Dorsolateral prefrontal cortex (tissue), 120 donors: ENCODE measurements at regions of chr17 and their contacts with region 1.

Region 1: GRCh38 chr17:63406689-63407330 is 39.3 kb downstream of the CYB561 start:
- DNase-seq: peak in 5 of 10 donors; percentile 59 to 87 (median 73)
- H3K4me3 ChIP-seq: no peak overlapping the region
- H3K27ac ChIP-seq: peak overlapping the region in 3 of 59 donors; percentile 3 to 22 (median 21)
- H3K27me3 ChIP-seq: no peaks in the 10 kb centered on the region
- CTCF ChIP-seq: peak; percentile 76 to 97 (median 88)

Region 2: GRCh38 chr17:62703775-62704378 is 702.9 kb before region 1 on chr17:
- intact Hi-C with region 1: loop called (anchors 2 to 5 kb)
- DNase-seq: peak in 9 of 10 donors; percentile 61 to 91 (median 73)
- H3K4me3 ChIP-seq: peak overlapping the region; percentile 48 to 94 (median 78)
- H3K27ac ChIP-seq: peak overlapping the region in 58 of 59 donors; percentile 52 to 95 (median 91)
- H3K27me3 ChIP-seq: no peaks in the 10 kb centered on the region
- CTCF ChIP-seq: peak; percentile 54 to 97 (median 84)

Region 3: DNA sequence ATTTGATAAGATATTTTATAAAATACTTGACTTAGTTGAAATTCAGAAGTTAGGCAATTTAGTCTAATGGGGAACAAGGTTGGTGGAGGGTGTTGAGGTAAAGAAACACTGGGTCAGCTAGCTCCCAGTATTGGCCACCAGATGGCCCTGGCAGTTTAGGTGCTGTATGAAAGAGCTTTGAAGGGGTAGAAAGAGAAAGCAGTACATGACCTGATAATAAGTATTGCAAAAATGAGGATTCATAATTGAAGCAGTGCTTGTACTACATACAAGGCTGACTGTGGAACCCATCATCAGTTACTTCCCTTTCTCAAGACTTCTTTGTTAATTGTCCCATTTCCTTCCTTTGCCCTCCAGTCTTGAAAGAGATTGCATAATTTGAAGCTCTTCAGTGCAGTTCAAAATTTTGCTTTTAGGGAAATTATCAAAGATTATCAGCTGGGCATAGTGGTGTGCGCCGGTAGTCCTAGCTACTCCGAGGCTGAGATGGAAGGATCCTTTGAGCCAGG is 411.4 kb before region 1 on chr17:
- intact Hi-C with region 1: loop called (anchors 5 to 10 kb)
- DNase-seq: peak in 2 of 10 donors; percentile 34 to 61
- H3K4me3 ChIP-seq: no peak overlapping the region
- H3K27ac ChIP-seq: peak overlapping the region in 1 of 59 donors; percentile 33
- H3K27me3 ChIP-seq: no peaks in the 10 kb centered on the region
- CTCF ChIP-seq: peak in 55 of 56 donors; percentile 32 to 78 (median 58)

Region 4: DNA sequence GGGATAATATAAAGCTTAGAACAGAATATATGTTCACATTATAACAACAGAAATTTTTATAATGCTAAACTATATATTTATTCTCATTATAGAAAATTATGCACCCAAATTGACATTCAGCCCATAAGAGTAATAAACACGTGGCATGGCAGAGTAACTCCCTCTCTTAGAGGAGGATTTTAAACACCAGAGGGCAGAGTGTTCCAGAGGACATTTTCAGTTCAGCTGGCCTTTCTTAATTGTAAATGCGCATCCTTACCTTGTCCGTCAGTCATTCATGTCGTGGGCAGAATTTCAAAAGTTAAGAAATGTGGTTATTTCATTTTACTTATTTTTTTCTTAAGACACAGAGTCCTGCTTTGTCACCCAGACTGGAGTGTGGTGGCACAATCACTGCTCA is 293.6 kb before region 1 on chr17:
- intact Hi-C with region 1: loop called (anchors 2 to 10 kb)
- DNase-seq: no peak
- H3K4me3 ChIP-seq: no peak overlapping the region
- H3K27ac ChIP-seq: no peak overlapping the region
- H3K27me3 ChIP-seq: no peaks in the 10 kb centered on the region
- CTCF ChIP-seq: peak in 54 of 56 donors; percentile 32 to 83 (median 60)

Region 5: DNA sequence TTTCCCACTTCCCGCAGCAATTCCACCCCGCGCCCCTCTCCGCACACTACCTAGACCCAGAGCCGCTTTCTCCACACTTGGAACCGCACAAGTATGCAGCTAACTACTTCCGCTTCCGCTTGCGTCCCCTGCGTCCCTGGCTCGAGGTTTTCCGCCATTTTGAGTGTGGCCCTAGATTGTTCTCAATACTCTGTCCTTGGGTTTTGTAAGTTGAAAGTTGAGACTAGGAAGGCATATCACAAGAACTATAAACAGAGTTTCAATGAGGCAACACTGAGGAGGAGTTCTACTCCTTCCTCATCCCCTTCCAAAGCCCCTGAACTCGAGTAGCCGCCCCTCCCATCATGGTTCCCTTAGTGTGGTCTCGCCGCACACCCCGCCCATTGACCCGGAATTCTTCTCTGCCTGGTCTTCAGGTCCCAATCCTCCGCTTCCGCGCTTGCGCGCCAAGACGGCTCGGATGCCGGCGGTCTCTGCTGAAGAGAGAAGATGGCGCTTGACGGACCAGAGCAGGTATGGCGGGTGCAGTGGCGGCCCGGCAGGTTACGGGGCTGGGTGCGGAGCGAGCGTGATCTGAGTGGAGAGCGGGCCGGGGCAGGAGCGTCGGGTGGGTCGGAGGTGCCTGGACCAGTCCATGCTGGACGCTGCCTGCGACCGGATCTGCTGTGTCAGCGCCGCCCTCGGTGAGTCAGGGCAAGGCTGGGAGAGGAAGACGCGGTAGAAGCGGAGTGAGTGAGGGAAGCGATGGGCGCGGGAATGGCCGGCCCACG is 420.4 kb after region 1 on chr17 and contains the starts of genes FTSJ3 and PSMC5:
- intact Hi-C with region 1: no loop called
- DNase-seq: peak; percentile 96 to 98 (median 97)
- H3K4me3 ChIP-seq: peak within 1 kb of the TSS; percentile 67 to 99 (median 92)
- H3K27ac ChIP-seq: peak within 1 kb of the TSS; percentile 80 to 100 (median 98)
- H3K27me3 ChIP-seq: no peaks in the 10 kb centered on the region
- CTCF ChIP-seq: peak in 52 of 56 donors; percentile 16 to 62 (median 46)
- total RNA-seq, gene FTSJ3: 13.7 to 39.6 (median 25.0) TPM
- total RNA-seq, gene PSMC5: 89.5 to 186 (median 136) TPM